ENCODE measurements at regions of chr7 and their contacts with region 1.

Region 1: GRCh38 chr7:137626469-137627067 is 220.2 kb downstream of the DGKI start:
- DNase-seq: peak; percentile 82

Region 2: GRCh38 chr7:137328373-137329120 is 298.0 kb before region 1 on chr7:
- CTCF ChIA-PET with region 1: no interaction called
- POLR2A ChIA-PET with region 1: no interaction called
- DNase-seq: no peak

Region 3: GRCh38 chr7:137606061-137606674 is 20.4 kb before region 1 on chr7:
- CTCF ChIA-PET with region 1: interaction called, 22 read pairs
- POLR2A ChIA-PET with region 1: no interaction called
- DNase-seq: no peak